WTC11 (cell line): ENCODE measurements at regions of chr10 and their contacts with region 1.

Region 1: DNA sequence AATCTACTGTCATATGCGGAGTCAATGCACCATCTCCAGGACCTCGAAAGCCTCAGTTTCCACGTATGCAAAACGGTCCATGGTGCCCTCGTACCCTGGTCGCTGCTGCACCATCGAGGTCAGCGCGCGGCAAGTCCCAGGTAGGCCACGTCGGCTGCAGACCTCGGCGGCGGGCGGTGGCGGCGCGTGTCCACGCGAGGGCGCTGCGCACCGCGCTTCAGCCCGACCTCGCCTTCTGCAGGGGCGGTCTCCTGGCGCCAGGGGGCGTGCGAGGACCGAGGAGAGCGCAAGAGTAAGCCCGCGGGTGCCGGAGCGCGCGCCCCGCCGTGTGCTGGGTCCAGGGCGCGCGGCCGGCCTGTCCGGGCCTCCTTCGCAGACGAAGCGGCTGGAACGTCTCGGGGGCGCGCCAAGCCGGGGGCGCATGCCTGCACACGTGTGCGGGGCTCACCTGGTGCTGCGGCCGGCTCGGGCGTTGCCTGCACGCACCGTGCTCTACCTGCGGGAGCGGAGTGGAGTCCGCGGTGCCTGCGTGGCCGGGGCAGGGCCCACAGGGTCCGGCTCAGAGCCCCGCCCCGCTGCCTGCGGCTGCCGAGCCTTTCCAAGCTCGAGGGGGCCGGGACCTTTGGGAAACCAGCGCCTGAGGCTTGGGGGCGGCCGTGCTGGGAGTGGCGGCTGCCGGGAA is 54.0 kb downstream of the GLRX3 start:
- DNase-seq: peak; percentile 93
- ATAC-seq: peak; percentile 77
- H3K4me3 Mint-ChIP-seq: no peak overlapping the region
- H3K27ac Mint-ChIP-seq: no peak overlapping the region
- H3K4me1 Mint-ChIP-seq: no peaks in the 10 kb centered on the region
- H3K27me3 Mint-ChIP-seq: peaks cover 14% of the 10 kb centered on the region
- CTCF ChIP-seq: peak; percentile 99

Region 2: GRCh38 chr10:130179640-130180039 is 10.6 kb before region 1 on chr10:
- CTCF ChIA-PET with region 1: interaction called, 10 read pairs
- POLR2A ChIA-PET with region 1: no interaction called
- DNase-seq: peak; percentile 36
- ATAC-seq: peak; percentile 90
- H3K4me3 Mint-ChIP-seq: no peak overlapping the region
- H3K27ac Mint-ChIP-seq: no peak overlapping the region
- H3K4me1 Mint-ChIP-seq: no peaks in the 10 kb centered on the region
- H3K27me3 Mint-ChIP-seq: no peaks in the 10 kb centered on the region
- CTCF ChIP-seq: no peak

Region 3: GRCh38 chr10:130352291-130352645 is 162.1 kb after region 1 on chr10:
- CTCF ChIA-PET with region 1: no interaction called
- POLR2A ChIA-PET with region 1: no interaction called
- DNase-seq: no peak
- ATAC-seq: no peak
- H3K4me3 Mint-ChIP-seq: no peak overlapping the region
- H3K27ac Mint-ChIP-seq: no peak overlapping the region
- H3K4me1 Mint-ChIP-seq: no peaks in the 10 kb centered on the region
- H3K27me3 Mint-ChIP-seq: peaks cover 5% of the 10 kb centered on the region
- CTCF ChIP-seq: no peak